AG04449 (cell line): ENCODE measurements at regions of chr12 and their contacts with region 1.

Region 1: DNA sequence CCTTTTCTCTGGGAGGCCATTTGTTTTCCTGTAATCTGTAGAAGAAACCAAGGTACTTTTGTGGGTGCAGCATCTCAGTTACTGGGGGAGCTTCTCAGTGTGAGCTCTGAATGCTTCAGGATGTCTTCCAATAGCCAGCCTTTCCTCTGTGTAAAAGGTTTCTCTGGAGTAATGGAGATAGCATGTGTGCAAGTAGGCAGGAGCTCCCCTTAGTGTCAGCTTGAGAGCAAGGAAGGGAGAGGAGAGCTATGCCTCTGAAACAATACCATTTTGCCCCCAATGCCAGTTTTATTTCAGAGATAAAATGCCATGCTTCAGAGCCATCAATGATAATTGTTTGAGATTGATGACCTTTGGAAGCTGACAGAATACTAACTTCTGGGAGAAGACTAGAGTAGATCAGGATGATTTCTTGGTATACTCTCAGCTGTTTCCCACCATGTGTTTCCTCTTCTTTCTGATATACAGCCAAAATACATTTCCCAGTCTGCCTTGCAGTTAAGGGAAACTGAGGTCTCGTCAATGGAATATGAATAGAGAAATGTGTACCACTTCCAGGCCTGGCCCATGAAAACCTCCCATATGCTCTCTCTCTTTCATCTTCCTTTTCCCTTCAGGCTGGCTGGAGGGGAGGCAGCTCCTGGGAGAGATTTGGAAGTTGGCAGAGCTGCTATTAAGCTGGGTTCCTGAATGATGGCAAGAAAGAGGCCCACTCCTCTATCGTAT is 125.7 kb downstream of the CRADD start:
- DNase-seq: no peak
- H3K4me3 ChIP-seq: no peak overlapping the region
- CTCF ChIP-seq: peak; percentile 43

Region 2: GRCh38 chr12:93790472-93791152 is 12.2 kb before region 1 on chr12:
- CTCF ChIA-PET with region 1: interaction called, 11 read pairs
- POLR2A ChIA-PET with region 1: no interaction called
- DNase-seq: peak; percentile 61
- H3K4me3 ChIP-seq: no peak overlapping the region
- CTCF ChIP-seq: no peak